Gastrocnemius medialis (tissue), 4 donors: ENCODE measurements at regions of chr1 and their contacts with region 1.

Region 1: DNA sequence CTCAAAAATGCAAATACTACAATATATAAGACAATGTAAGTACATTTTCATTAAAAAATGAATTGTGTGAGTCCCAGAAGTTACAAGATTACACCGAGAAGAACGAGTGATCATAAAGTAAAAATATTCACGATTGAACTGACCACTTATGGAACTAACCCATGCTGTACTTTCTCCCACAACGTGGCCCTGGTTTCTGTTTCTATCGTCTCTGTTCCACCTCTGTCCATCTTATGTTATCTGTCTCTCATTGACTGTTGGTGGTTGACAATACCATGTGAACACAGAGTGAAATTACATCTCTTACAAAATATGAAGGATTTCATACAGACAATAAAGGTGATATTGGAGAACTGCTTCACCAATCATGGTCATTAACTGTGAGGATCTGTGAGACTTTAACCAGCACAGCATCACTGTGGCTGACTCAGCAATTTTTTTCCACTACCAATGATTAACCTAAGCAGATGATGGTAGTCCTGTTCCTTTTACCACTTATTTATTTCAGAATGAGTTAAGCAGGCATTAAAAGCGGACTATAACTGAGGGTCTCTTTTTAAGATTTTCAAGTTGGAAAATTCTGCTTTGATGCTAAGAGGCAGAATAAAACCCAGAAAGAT is 165.1 kb downstream of the TGFB2 start:
- DNase-seq: no peak
- ATAC-seq: no peak
- H3K4me3 ChIP-seq: no peak overlapping the region
- H3K27ac ChIP-seq: no peak overlapping the region
- H3K4me1 ChIP-seq: no peaks in the 10 kb centered on the region
- H3K27me3 ChIP-seq: no peaks in the 10 kb centered on the region
- CTCF ChIP-seq: no peak
- POLR2A ChIP-seq: no peak

Region 2: GRCh38 chr1:218433744-218434143 is 76.5 kb before region 1 on chr1:
- in situ Hi-C with region 1: no loop called
- intact Hi-C with region 1: loop called (anchors 1 kb)
- DNase-seq: no peak
- ATAC-seq: peak in 1 of 2 donors; percentile 39
- H3K4me3 ChIP-seq: no peak overlapping the region
- H3K27ac ChIP-seq: peak overlapping the region; percentile 25 to 85 (median 82)
- H3K4me1 ChIP-seq: peaks cover 8 to 31% of the 10 kb centered on the region in 2 donors
- H3K27me3 ChIP-seq: no peaks in the 10 kb centered on the region
- CTCF ChIP-seq: no peak
- POLR2A ChIP-seq: no peak